Heart right ventricle (tissue), 16 donors: ENCODE measurements at regions of chr4 and their contacts with region 1.

Region 1: GRCh38 chr4:38768968-38769394 is 13.8 kb downstream of the TLR10 start:
- DNase-seq: no peak
- ATAC-seq: peak in 6 of 8 donors; percentile 28 to 78 (median 40)
- H3K4me3 ChIP-seq: no peak overlapping the region
- H3K27ac ChIP-seq: peak overlapping the region in 3 of 10 donors; percentile 1 to 51 (median 42)
- H3K4me1 ChIP-seq: peaks cover 0 to 13% (median 0%) of the 10 kb centered on the region in 9 donors
- H3K27me3 ChIP-seq: no peaks in the 10 kb centered on the region
- CTCF ChIP-seq: no peak

Region 2: GRCh38 chr4:38867478-38868058 is 98.6 kb after region 1 on chr4 and contains the start of gene FAM114A1:
- intact Hi-C with region 1: loop called in 1 of 10 experiments (anchors 10 kb)
- DNase-seq: peak; percentile 83 to 87
- ATAC-seq: peak; percentile 95 to 99 (median 97)
- H3K4me3 ChIP-seq: peak within 1 kb of the TSS; percentile 66 to 96 (median 90)
- H3K27ac ChIP-seq: peak within 1 kb of the TSS; percentile 81 to 96 (median 93)
- H3K4me1 ChIP-seq: peaks cover 0 to 42% (median 21%) of the 10 kb centered on the region in 9 donors
- H3K27me3 ChIP-seq: no peaks in the 10 kb centered on the region
- CTCF ChIP-seq: no peak
- total RNA-seq, gene FAM114A1: 11.8 to 35.5 (median 17.2) TPM